ENCODE measurements at regions of chr6 and their contacts with region 1.

Region 1: DNA sequence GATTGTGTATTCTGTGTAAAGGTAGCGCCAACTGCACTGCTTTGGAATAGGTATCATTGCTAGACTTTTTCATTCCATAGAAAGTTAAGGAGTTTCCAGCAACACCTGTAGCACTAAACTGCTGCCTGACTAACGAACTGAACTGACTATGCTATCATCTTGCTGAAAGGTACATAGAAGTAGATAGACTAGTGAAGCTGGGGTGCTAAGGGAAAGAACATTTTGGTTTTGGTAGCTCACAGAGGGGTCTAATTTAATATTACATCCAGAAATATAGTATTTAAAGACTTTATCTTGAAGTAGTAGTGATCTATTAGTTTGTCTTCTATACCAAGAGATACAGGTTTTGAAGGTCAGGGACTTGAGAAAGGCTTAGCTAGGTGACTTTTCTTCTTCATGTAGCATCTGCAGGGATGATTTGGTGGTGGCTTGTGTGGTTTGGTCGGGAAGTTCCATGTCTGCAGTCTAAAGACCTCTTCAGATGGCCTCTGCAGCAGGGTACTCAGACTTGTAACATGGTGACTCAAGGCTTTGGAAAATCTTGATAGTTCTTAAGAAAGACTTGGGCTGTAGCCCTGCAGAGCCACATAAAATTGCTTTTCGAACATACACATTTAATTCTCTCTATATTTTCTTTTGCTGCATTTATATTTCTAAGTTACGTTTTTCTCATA is 10.2 kb downstream of the SENP6 start:
- DNase-seq: peak; percentile 70
- ATAC-seq: peak; percentile 62
- H3K4me3 Mint-ChIP-seq: peak overlapping the region; percentile 62
- H3K27ac Mint-ChIP-seq: peak overlapping the region; percentile 87
- H3K4me1 Mint-ChIP-seq: peaks cover 78% of the 10 kb centered on the region
- H3K27me3 Mint-ChIP-seq: no peaks in the 10 kb centered on the region

Region 2: DNA sequence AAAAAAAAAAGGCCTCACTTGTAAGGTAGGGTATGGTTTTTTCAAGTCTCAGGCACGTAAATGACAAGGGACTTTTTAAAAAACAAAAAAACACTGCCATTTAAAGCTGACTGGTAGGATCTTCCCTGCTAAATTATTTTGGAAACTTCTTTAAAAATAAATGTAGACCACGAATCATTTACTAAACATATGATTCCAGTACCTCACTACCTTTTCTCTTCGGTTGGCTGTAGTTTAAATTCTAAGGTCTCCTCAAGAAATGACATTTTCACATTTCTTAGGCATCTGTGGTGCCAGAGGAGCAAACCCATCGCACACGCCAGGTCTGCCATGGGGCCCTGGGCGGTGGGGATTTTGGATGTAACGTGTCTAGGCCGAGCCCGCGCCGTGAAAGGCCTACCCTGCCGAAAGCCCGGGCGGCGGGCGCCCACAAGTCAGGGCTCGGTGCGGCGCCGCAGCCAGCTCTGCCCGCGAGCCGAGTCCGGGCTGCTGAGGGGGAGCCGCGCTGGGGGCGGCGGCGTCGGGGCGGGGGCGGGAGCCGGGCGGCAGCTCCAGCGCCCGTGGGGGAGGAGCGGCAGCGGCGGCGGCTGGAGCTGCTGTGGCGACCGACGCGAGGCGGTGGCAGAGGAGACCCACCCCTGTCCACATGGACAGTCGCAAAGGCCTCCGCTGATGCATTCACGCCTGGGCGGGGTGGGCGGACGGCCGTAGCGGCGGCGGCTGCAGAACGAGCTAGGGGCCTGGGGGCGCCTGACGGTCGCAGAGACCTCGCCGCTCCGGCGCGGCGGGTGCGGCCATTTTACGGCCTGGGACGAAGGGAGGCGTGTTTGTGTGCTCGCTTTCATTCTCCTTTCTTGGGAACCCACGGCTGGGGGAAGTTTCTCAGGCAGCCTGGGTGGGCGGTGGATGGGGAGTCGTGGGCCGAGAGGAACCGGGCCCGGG is 10.3 kb before region 1 on chr6 and contains the start of gene SENP6:
- CTCF ChIA-PET with region 1: interaction called, 15 read pairs
- DNase-seq: peak; percentile 79
- ATAC-seq: peak; percentile 77
- H3K4me3 Mint-ChIP-seq: peak within 1 kb of the TSS; percentile 98
- H3K27ac Mint-ChIP-seq: peak within 1 kb of the TSS; percentile 97
- H3K4me1 Mint-ChIP-seq: peaks cover 50% of the 10 kb centered on the region
- H3K27me3 Mint-ChIP-seq: no peaks in the 10 kb centered on the region
- total RNA-seq, gene SENP6: 79.2 to 80.4 TPM